Mammary epithelial cell (primary cell): ENCODE measurements at regions of chr13 and their contacts with region 1.

Region 1: DNA sequence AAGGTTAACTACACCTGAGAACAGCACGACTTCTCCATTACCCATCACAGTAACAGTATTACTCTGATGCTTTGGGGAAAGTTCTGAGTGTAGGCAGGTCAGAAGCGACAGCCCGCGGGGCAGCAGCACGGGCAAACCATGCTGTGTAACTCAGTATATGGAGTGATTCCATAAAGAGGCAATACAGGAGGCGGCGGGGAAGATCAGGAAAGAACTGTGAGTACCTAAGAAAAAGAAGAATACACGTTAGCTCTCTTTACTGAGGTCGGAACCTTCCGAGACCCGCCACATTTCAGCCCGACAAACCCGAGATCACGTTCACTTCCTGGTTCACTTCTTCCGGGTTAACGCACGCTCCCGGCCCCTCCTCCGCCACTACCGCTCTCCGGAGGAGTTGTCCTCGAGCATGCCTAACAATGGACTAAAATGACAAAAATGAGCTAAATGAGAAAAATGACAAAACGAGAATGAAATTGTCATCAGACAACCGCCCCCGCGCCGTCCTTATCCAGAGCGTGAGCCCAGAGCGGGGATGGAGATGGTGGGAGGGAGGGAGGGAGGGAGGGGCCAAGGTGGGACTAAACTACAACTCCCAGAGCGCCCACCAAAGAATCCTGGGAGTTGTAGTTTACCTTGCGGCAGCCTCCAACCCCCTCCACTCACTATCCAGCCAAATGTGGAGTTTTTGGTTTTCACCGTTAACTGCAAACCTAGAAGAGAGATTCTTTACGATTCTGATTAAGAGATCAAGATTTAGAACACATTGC is at the start of gene MTRF1:
- DNase-seq: peak; percentile 82
- H3K4me3 ChIP-seq: peak within 1 kb of the TSS; percentile 72 to 81 (median 80)
- H3K27ac ChIP-seq: peak within 1 kb of the TSS; percentile 79
- H3K4me1 ChIP-seq: peaks cover 24% of the 10 kb centered on the region
- H3K27me3 ChIP-seq: no peaks in the 10 kb centered on the region
- CTCF ChIP-seq: no peak
- total RNA-seq, gene MTRF1: 8.7 to 12.7 TPM

Region 2: GRCh38 chr13:41054212-41054877 is 209.1 kb before region 1 on chr13:
- CTCF ChIA-PET with region 1: no interaction called
- dilution Hi-C with region 1: no loop called
- in situ Hi-C with region 1: no loop called
- intact Hi-C with region 1: no loop called
- DNase-seq: peak; percentile 48
- H3K4me3 ChIP-seq: no peak overlapping the region
- H3K27ac ChIP-seq: no peak overlapping the region
- H3K4me1 ChIP-seq: peaks cover 15% of the 10 kb centered on the region
- H3K27me3 ChIP-seq: no peaks in the 10 kb centered on the region
- CTCF ChIP-seq: peak; percentile 54 to 61

Region 3: DNA sequence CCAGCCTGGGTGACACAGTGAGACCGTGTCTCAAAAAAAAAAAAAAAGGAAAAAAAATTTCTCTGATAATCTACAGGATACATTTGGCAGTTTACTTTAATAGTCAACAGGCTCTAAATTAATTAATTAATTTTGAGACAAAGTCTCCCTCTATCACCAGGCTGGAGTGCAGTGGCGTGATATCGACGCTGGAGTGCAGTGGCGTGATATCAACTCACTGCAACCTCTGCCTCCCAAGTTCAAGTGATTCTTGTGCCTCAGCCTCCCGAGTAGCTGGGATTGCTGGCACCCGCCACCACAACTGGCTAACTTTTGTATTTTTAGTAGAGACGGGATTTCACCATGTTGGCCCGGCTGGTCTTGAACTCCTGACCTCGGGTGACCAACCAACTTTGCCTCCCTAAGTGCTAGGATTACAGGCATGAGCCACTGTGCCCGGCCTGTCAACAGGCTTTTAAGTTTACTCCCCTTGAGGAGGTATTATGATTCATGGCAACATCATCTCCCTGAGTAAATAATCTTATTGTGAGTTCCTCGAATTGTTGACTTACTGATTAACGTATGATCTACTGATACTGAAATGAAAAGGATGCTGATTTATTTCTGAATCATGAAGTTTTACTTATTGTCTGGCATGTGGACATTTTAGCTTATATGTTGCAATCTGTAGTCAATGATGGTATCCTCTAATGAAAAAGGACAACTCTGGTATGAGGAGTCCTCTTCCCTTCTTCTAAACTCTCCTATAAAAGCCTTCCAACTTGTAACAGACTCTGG is 21.3 kb after region 1 on chr13:
- CTCF ChIA-PET with region 1: no interaction called
- dilution Hi-C with region 1: no loop called
- in situ Hi-C with region 1: no loop called
- intact Hi-C with region 1: loop called (anchors 2 kb)
- DNase-seq: peak; percentile 96
- H3K4me3 ChIP-seq: no peak overlapping the region
- H3K27ac ChIP-seq: peak overlapping the region; percentile 81
- H3K4me1 ChIP-seq: peaks cover 12% of the 10 kb centered on the region
- H3K27me3 ChIP-seq: no peaks in the 10 kb centered on the region
- CTCF ChIP-seq: no peak